Activated CD4-positive, alpha-beta T cell treated with anti-CD3 and anti-CD28 coated beads, Interleukin-2, amount 10 ng/mL, durations not matched to agents 24 days and 14 days (primary cell): ENCODE measurements at regions of chr4 and their contacts with region 1.

Region 1: GRCh38 chr4:83217721-83218522 is 66.7 kb downstream of the COQ2 start:
- DNase-seq: peak; percentile 92
- H3K4me3 Mint-ChIP-seq: peak overlapping the region; percentile 69
- H3K27ac Mint-ChIP-seq: peak overlapping the region; percentile 83
- H3K4me1 Mint-ChIP-seq: peaks cover 66% of the 10 kb centered on the region
- H3K27me3 Mint-ChIP-seq: no peaks in the 10 kb centered on the region

Region 2: GRCh38 chr4:83231620-83232076 is 13.7 kb after region 1 on chr4:
- intact Hi-C with region 1: loop called (anchors 1 kb)
- DNase-seq: peak; percentile 89
- H3K4me3 Mint-ChIP-seq: peak overlapping the region; percentile 48
- H3K27ac Mint-ChIP-seq: peak overlapping the region; percentile 52
- H3K4me1 Mint-ChIP-seq: peaks cover 55% of the 10 kb centered on the region
- H3K27me3 Mint-ChIP-seq: peaks cover 6% of the 10 kb centered on the region

Region 3: GRCh38 chr4:83237591-83237990 is 19.7 kb after region 1 on chr4:
- intact Hi-C with region 1: loop called (anchors 1 kb)
- DNase-seq: no peak
- H3K4me3 Mint-ChIP-seq: no peak overlapping the region
- H3K27ac Mint-ChIP-seq: no peak overlapping the region
- H3K4me1 Mint-ChIP-seq: peaks cover 51% of the 10 kb centered on the region
- H3K27me3 Mint-ChIP-seq: peaks cover 33% of the 10 kb centered on the region

Region 4: DNA sequence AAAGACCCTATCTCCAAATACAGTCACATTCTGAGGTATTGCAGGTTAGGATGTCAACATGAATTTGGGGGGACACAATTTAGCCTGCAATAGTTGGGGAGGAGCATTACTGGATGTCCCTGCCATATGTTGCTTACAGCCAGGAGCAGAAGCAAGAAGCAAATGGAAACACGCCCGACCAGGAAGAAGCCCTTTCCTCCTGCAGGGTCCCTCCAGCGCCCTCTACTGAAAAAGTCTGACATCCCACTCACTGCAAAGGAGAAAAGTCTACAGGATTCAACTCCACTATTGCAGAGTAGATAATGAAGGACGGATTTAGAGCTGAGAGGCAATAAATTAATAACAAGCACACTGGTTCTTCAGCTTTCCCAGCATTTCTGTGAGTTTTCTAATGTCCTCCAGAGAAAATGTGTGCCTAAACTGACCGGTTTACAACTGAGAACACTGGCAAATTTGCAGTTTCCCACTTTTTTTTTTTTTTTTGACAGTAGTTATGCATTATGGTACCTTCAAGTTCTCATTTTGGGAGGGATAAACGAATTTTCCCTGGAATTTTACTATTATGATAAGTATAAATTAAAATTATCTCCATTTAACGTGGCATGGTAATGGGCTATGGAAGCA is 35.0 kb after region 1 on chr4:
- intact Hi-C with region 1: loop called (anchors 5 kb)
- DNase-seq: peak; percentile 93
- H3K4me3 Mint-ChIP-seq: no peak overlapping the region
- H3K27ac Mint-ChIP-seq: no peak overlapping the region
- H3K4me1 Mint-ChIP-seq: peaks cover 24% of the 10 kb centered on the region
- H3K27me3 Mint-ChIP-seq: no peaks in the 10 kb centered on the region

Region 5: DNA sequence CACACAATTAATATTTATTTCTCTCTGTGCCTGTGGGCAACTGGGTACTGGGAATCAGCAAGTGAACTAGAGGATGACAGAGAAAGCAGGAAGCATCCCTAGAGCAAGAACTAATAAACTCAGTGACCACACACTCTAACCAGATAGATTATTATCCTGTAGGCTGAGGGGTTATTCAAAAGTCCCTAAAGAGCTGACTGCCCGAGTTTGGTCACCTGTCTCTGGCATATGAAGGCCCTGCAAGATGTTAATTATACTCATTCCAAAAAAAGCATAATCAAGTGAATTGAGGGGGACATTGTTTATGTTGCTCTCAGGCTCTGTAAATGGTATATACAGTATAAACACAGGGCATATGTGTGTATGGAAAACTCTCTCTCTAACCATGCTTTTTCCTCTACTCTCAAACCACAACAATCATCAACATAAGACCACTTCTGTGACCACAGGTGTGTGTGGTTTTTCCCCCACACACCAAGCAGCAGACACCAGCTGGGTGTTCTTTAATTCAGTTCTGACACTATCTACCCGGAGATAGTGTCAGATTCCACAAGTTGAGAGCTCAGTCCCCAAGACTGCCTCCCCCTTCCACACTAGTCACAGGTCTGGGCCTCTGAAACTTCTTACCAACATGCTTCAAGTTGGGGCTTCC is 122.9 kb after region 1 on chr4:
- intact Hi-C with region 1: loop called (anchors 5 kb)
- DNase-seq: peak; percentile 87
- H3K4me3 Mint-ChIP-seq: peak overlapping the region; percentile 50
- H3K27ac Mint-ChIP-seq: peak overlapping the region; percentile 93
- H3K4me1 Mint-ChIP-seq: peaks cover 25% of the 10 kb centered on the region
- H3K27me3 Mint-ChIP-seq: peaks cover 26% of the 10 kb centered on the region

Region 6: GRCh38 chr4:83455281-83456129 is 237.6 kb after region 1 on chr4 and contains the starts of genes HELQ and MRPS18C:
- intact Hi-C with region 1: loop called (anchors 1 kb)
- DNase-seq: peak; percentile 98
- H3K4me3 Mint-ChIP-seq: peak within 1 kb of the TSS; percentile 99
- H3K27ac Mint-ChIP-seq: peak within 1 kb of the TSS; percentile 100
- H3K4me1 Mint-ChIP-seq: peaks cover 26% of the 10 kb centered on the region
- H3K27me3 Mint-ChIP-seq: no peaks in the 10 kb centered on the region
- total RNA-seq, gene HELQ: 9.1 and 11.4 TPM in 2 replicates
- total RNA-seq, gene MRPS18C: 83.9 and 86.6 TPM in 2 replicates

Region 7: DNA sequence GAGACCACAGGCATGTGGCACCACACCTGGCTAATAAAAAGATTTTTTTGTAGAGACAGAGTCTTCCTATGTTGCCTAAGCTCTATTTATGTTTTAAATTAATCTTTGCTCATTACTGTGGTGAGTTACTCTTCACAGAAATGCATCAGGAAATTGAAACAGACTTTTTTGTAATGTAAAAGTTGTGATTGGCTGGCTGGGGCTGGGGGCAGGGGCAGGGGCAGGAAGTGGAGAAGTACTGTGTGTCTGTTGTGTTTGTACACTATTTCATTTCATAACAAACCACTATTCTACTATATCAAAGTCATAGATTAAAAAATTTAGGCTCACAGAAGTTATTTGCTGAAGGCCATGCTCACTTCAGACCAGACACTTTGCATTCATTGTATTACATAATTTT is 286.1 kb after region 1 on chr4:
- intact Hi-C with region 1: no loop called
- DNase-seq: no peak
- H3K4me3 Mint-ChIP-seq: no peak overlapping the region
- H3K27ac Mint-ChIP-seq: no peak overlapping the region
- H3K4me1 Mint-ChIP-seq: peaks cover 5% of the 10 kb centered on the region
- H3K27me3 Mint-ChIP-seq: no peaks in the 10 kb centered on the region